ENCODE measurements at regions of chr11 and their contacts with region 1.

Region 1: DNA sequence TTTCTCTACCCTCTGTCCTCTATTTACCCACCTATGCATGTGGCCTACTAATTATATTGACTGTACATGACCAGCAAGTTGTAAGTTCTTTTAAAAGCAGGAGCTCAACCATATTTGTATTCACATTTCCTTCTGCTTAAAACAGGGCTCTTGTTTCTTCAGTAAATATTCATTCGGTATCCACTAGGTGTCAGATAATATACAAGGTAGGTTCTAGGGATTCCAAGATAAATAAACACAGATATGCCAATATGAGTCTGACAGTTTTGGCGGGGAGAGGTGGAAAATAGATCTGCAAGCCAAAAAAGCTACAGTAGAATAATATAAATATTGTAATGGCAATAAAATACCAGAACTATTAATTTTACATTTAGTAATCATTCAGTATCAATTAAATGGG is 15.3 kb upstream of the RAB30 start:
- DNase-seq: peak; percentile 23
- H3K4me3 ChIP-seq: no peak overlapping the region
- H3K27ac ChIP-seq: no peak overlapping the region
- H3K4me1 ChIP-seq: no peaks in the 10 kb centered on the region
- H3K27me3 ChIP-seq: no peaks in the 10 kb centered on the region
- CTCF ChIP-seq: peak; percentile 31; the same call in 1 of the 2 replicates

Region 2: DNA sequence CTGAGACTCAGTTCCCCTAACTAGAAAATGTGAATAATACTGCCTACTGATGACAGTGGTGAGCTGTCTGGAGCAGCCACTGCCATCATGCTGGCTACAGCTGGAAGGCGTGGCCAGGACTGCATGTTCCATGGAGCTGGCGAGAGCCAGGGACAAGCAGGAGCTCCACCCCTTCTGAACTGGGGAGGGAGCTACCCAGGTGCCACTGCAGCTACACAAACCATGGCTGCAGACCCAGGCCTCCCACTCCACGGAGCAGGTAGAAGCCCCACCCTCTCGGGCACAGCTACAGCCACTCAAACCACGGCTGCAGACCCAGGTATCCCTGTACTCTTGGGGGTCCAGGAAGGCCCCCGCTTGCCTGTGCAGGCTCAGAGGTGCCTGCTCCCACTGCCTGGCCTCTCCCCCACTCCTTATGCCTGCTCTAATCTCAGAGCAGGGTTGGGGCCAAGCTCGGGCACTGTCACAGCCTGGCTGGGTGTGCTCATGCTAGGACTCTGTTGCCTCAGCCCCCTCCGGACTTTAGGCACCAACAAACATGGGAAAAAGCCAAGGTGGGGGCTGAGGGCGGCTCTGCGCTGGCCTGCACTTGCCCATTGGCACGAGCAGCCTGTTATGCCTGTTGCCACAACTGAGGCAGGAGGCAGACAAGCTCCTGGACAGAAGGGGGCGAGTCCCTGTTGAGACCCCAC is 67.0 kb before region 1 on chr11:
- CTCF ChIA-PET with region 1: no interaction called
- POLR2A ChIA-PET with region 1: interaction called, 11 read pairs
- intact Hi-C with region 1: no loop called
- DNase-seq: no peak
- H3K4me3 ChIP-seq: no peak overlapping the region
- H3K27ac ChIP-seq: no peak overlapping the region
- H3K4me1 ChIP-seq: no peaks in the 10 kb centered on the region
- H3K27me3 ChIP-seq: no peaks in the 10 kb centered on the region
- CTCF ChIP-seq: no peak

Region 3: DNA sequence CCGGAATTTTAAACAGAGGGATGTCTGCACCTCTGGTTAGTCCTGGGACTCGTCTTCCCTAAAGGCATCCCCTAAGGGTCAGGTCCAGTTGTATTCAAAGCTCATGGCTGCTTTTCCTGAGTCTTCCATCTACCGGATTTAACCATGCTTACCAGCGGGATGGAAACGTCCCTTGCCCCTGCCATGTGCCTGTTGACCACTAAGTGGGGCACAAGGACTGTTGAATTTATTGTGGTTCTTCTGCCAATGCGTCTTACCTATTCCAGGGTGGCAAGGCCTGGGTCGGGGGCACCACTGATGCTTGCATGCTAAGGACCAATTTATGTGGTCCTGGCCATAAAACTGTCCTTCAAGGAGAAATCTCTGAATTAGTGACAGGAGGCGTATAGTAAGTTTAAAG is 132.1 kb after region 1 on chr11:
- CTCF ChIA-PET with region 1: no interaction called
- POLR2A ChIA-PET with region 1: no interaction called
- intact Hi-C with region 1: no loop called
- DNase-seq: peak; percentile 37
- H3K4me3 ChIP-seq: no peak overlapping the region
- H3K27ac ChIP-seq: no peak overlapping the region
- H3K4me1 ChIP-seq: no peaks in the 10 kb centered on the region
- H3K27me3 ChIP-seq: no peaks in the 10 kb centered on the region
- CTCF ChIP-seq: peak; percentile 55